ENCODE measurements at regions of chr12 and their contacts with region 1.

Region 1: DNA sequence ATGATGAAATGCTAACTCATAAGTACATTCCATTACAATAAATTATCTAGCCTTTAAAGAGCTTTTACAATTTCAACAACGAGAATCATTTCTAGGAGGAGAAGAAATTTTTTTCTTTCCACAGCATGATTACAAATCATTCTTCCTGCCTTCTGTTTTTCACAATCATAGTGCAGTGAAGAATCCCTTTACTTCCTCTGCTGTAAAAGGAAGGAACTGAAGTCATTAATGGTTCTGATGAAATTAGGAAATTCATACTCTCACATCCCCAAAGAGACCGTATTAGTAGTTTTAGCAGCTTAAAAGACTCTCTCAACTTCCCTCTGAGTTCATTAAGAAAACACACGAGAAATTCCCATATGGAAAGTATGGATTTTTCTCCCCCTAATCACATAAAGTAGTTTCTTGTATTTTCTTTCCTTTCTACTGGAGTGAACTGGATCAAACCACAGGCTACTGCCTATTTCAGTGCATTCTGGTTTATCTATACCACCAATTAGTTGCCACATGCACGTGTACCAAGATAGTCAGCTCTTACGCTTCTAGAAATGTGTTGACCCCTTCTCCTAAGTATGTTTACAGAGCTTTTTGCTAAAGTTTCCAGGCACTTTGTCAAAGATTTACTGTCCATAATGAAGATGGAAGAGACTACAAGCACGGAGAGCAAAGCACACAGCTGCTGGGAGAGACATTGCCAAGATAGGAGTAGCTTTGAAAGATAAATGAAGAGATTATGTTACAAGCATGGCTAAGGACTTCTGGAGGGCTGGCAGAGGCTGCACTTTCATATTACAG is 58.9 kb upstream of the KITLG start:
- DNase-seq: peak; percentile 60
- H3K4me3 ChIP-seq: no peak overlapping the region
- H3K27ac ChIP-seq: peak overlapping the region; percentile 59
- H3K4me1 ChIP-seq: peaks cover 16% of the 10 kb centered on the region
- H3K27me3 ChIP-seq: no peaks in the 10 kb centered on the region
- CTCF ChIP-seq: no peak
- POLR2A ChIP-seq: no peak

Region 2: GRCh38 chr12:88111074-88111652 is 528.0 kb before region 1 on chr12:
- CTCF ChIA-PET with region 1: no interaction called
- POLR2A ChIA-PET with region 1: no interaction called
- dilution Hi-C with region 1: no loop called
- intact Hi-C with region 1: no loop called
- DNase-seq: peak; percentile 67
- H3K4me3 ChIP-seq: peak overlapping the region in 1 of 3 experiments; percentile 61
- H3K27ac ChIP-seq: peak overlapping the region; percentile 20
- H3K4me1 ChIP-seq: peaks cover 5% of the 10 kb centered on the region
- H3K27me3 ChIP-seq: no peaks in the 10 kb centered on the region
- CTCF ChIP-seq: peak in 1 of 2 donors; percentile 2
- POLR2A ChIP-seq: no peak

Region 3: GRCh38 chr12:88650715-88651114 is 11.6 kb after region 1 on chr12:
- CTCF ChIA-PET with region 1: interaction called, 12 read pairs
- POLR2A ChIA-PET with region 1: no interaction called
- dilution Hi-C with region 1: no loop called
- intact Hi-C with region 1: no loop called
- DNase-seq: no peak
- H3K4me3 ChIP-seq: no peak overlapping the region
- H3K27ac ChIP-seq: no peak overlapping the region
- H3K4me1 ChIP-seq: no peaks in the 10 kb centered on the region
- H3K27me3 ChIP-seq: no peaks in the 10 kb centered on the region
- CTCF ChIP-seq: no peak
- POLR2A ChIP-seq: no peak

Region 4: GRCh38 chr12:89524541-89525285 is 885.5 kb after region 1 on chr12 and contains the start of gene GALNT4:
- CTCF ChIA-PET with region 1: no interaction called
- POLR2A ChIA-PET with region 1: no interaction called
- dilution Hi-C with region 1: no loop called
- intact Hi-C with region 1: loop called (anchors 10 kb)
- DNase-seq: peak; percentile 92
- H3K4me3 ChIP-seq: peak within 1 kb of the TSS; percentile 16 to 92 (median 59)
- H3K27ac ChIP-seq: peak within 1 kb of the TSS; percentile 35
- H3K4me1 ChIP-seq: peaks cover 32% of the 10 kb centered on the region
- H3K27me3 ChIP-seq: no peaks in the 10 kb centered on the region
- CTCF ChIP-seq: peak; percentile 40 to 82
- POLR2A ChIP-seq: peak; percentile 25
- total RNA-seq, gene GALNT4: 9.8 and 10.9 TPM in 2 replicates